ENCODE measurements at regions of chr10 and their contacts with region 1.

Region 1: GRCh38 chr10:110376021-110376766 is 71.5 kb upstream of the SMNDC1 start:
- DNase-seq: no peak
- CTCF ChIP-seq: no peak

Region 2: DNA sequence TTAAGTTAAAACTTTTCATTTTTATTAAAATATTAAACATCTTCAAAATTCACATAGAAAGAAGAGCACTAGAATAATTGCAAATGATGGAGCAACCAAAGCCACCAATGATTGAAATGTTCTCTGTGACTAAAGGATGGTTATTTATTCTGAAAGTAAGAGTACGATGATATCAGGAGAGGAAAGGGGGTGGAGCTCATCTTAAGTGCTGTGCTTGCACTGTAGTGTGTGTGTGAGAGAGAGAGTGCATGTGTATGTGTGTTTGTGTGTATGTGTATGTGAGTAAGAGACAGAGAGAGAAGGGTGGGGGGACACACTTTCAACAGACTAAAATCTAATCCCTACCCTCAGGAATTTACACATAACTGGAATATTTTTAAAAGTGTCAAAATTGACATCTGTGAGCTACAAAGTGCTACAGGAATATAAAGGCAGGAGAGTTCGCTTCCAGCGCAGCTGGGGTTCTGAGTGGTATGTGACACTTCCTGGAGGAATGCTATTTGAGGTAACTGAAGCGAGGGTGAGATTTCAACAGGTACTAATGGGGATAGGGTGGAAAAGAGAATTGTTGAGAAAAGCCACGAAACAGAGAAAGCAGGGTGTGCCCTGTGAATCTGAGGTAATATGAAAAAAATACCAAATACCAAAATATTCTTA is 14.3 kb before region 1 on chr10:
- CTCF ChIA-PET with region 1: interaction called, 17 read pairs
- POLR2A ChIA-PET with region 1: interaction called, 3 read pairs
- DNase-seq: no peak
- CTCF ChIP-seq: no peak